PC-3 (cell line): ENCODE measurements at regions of chr3 and their contacts with region 1.

Region 1: DNA sequence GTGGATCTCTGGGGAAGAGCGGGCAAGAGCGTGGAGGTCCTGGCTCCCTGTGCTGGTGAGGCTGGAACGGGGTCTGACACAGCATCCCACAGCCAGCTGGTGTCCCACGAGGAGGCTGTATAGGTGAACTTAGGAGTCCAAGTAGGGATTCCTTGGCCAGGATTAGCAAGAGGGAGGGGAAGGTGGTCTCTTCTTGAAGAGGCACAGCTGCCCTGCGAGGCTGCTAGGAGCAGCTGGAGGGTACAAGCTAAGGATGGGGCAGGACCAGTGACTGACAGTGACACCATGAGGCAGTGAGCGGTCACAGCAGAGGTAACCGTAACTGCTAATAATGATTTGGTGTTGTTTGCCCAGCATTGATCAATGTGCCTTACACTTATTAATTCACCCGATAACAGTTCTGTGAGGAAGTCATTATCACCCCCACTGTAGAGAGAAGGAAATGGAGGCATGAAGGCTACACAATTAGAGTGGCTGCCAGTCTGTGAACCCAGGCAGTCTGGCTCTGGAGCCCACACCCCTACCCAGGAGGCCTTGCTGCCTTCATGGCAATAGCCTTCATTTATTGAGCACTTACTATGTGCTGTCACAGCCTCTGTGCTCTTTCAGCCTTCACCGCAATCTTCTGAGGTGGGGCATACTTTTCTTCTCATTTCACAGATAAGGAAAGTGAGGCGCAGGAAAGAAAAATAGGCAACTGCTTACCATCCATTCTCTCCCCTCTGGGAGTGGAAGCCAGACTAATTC is 59.4 kb downstream of the TMEM44 start:
- DNase-seq: peak; percentile 49
- ATAC-seq: peak; percentile 35; the same call in 1 of the 2 replicates
- H3K4me3 ChIP-seq: no peak overlapping the region
- H3K27ac ChIP-seq: no peak overlapping the region; the same call in 1 of the 2 replicates
- H3K4me1 ChIP-seq: peaks cover 37% of the 10 kb centered on the region
- H3K27me3 ChIP-seq: no peaks in the 10 kb centered on the region
- CTCF ChIP-seq: peak; percentile 73

Region 2: DNA sequence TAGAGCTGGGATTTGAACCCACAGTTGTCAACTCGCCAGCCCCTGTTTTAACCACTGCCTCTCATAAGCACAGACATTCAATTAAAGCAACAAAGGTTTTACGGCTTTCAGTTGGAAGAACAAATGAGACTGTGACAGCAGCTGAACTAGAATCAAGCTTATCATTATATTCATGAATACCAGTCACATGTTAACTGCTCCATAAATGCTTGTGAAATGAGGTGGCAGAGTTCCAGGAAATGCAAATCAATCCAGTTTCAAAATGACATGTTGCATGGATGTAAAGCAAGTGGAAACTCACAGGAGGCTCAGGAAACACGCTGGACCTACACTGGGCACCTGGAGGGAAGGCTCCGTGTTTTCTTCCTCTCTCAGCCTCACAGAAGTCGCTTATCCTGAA is 178.7 kb before region 1 on chr3:
- CTCF ChIA-PET with region 1: no interaction called
- POLR2A ChIA-PET with region 1: no interaction called
- intact Hi-C with region 1: no loop called
- DNase-seq: peak; percentile 14
- ATAC-seq: no peak
- H3K4me3 ChIP-seq: no peak overlapping the region
- H3K27ac ChIP-seq: no peak overlapping the region
- H3K4me1 ChIP-seq: no peaks in the 10 kb centered on the region
- H3K27me3 ChIP-seq: peaks cover 12% of the 10 kb centered on the region
- CTCF ChIP-seq: no peak

Region 3: GRCh38 chr3:194472290-194472920 is 101.5 kb before region 1 on chr3:
- CTCF ChIA-PET with region 1: interaction called, 7 read pairs
- POLR2A ChIA-PET with region 1: no interaction called
- intact Hi-C with region 1: loop called (anchors 1 kb)
- DNase-seq: peak; percentile 85
- ATAC-seq: peak; percentile 84
- H3K4me3 ChIP-seq: no peak overlapping the region
- H3K27ac ChIP-seq: no peak overlapping the region
- H3K4me1 ChIP-seq: no peaks in the 10 kb centered on the region
- H3K27me3 ChIP-seq: no peaks in the 10 kb centered on the region
- CTCF ChIP-seq: peak; percentile 95

Region 4: DNA sequence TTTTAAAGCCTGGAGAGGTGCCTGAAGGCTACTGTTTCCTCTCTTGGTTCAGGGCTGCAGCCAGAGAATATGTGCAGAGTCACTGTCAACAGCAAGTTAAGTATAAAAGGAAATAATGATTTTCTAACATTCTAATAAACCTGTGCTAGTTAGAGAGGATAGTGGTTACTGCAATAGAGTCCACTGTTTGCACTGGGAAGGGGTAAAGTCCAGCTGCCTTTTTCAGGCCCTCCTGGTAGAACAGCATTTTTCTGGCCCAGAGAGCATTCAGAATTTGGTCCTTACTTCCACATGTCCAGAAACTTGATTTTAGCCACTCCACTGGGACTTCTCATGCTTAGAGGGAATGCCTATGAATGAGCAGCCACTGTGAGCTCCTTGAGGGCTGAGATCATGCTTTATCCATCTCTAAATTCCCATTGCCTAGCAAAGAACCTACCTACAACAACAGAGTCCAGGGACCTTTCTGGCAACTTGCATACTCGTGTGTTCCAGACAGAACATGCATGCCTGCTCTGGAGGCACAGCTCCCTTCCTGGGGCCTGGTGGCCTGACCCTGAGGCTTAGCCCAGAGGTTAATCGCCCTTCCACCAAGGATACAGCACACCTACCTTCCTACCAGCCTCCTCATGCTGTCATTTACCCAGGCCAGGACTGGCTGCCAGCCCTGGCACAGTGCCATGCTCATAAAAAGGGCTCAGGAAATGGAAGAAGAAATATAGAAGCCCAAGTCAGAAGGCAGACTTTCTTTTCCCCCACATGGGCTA is 36.8 kb before region 1 on chr3:
- CTCF ChIA-PET with region 1: interaction called, 3 read pairs
- POLR2A ChIA-PET with region 1: interaction called, 7 read pairs
- intact Hi-C with region 1: loop called (anchors 5 kb)
- DNase-seq: peak; percentile 91
- ATAC-seq: peak; percentile 80
- H3K4me3 ChIP-seq: peak overlapping the region; percentile 15; the same call in 1 of the 2 replicates
- H3K27ac ChIP-seq: peak overlapping the region; percentile 69
- H3K4me1 ChIP-seq: peaks cover 15% of the 10 kb centered on the region
- H3K27me3 ChIP-seq: no peaks in the 10 kb centered on the region
- CTCF ChIP-seq: no peak